ENCODE measurements at regions of chr2 and their contacts with region 1.

Region 1: GRCh38 chr2:29115797-29116781 is 874 bp downstream of the CLIP4 start:
- DNase-seq: peak; percentile 88
- ATAC-seq: peak; percentile 77

Region 2: GRCh38 chr2:29053223-29053622 is 62.9 kb before region 1 on chr2:
- intact Hi-C with region 1: no loop called
- DNase-seq: no peak
- ATAC-seq: peak; percentile 16

Region 3: DNA sequence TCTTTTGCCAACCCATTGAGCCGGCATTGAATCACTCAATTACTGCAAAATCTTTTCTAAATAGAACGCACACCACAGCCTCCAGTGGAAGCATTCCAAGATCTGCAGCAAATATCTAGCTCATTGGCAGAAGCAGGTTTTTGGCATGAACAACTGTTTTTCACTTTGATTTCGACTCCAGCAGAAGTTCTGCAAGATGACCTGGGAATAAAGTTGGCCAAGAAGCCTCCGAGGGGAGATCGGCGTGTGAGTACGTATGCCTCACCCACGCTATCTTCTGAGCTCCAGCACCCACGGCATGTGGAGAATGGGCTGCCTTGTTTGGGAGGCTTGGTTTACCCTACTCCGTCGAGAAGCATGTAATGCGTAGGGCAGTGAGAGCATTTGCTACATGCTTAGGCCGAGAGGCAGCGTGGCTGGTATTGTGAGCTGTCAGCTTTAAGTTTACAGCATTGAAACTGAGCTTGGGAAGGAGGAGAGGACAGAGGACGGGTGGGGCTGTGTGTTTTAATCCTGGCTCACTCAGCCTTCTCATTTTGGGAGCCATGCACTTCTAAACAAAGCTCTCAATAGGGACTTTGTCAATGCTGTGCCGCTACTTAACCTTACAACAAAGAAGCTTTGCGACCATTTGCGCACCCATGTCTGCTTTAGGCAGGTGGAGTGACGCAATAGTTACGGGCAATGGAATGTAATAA is 52.3 kb before region 1 on chr2:
- intact Hi-C with region 1: loop called (anchors 10 kb)
- DNase-seq: peak; percentile 73
- ATAC-seq: peak; percentile 70

Measured in sciatic nerve (tissue), 2 donors.